PC-3 (cell line): ENCODE measurements at regions of chrX and their contacts with region 1.

Region 1: GRCh38 chrX:13123857-13124345 is 79.5 kb upstream of the FAM9C start:
- DNase-seq: peak; percentile 68
- ATAC-seq: peak; percentile 83
- H3K4me3 ChIP-seq: peak overlapping the region; percentile 14; the same call in 1 of the 2 replicates
- H3K27ac ChIP-seq: peak overlapping the region; percentile 92
- H3K4me1 ChIP-seq: peaks cover 54% of the 10 kb centered on the region
- H3K27me3 ChIP-seq: no peaks in the 10 kb centered on the region
- CTCF ChIP-seq: no peak

Region 2: DNA sequence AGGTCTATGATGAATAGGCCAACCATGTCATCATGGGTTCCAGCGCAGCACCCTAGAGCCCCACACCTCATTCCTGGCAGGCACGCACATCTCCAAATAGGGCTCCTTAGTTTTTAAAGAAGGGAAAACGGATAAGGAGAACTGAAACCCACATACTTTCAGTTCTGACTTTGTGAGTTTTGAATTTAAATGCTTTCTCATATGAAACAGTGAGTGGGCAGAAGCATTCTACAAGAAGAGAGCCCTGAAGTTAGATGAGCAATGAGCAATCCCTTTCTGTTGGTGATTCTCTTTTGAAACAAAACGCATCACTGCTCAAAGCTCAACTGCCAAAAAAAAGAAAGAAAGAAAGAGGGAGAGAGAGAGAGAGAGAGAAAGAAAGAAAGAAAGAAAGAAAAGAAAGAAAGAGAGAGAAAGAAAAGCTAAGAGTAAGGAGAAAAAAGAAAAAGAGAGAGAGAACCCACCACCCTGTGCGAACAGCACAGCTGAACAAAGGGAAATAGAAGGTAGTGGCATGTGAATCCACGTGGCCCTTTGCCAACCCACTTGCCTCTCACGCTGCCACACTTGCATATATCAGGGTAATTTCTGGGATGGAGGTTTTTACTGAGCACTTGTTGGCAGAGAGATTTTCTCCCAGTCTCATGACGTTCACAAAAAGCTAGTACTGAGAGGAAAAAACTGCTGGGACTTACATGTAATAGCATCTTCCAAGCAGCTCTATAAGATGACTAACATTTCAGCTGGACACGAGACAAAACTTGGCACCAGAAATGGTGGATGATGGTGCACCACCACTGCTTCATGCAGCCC is 118.0 kb before region 1 on chrX:
- CTCF ChIA-PET with region 1: no interaction called
- POLR2A ChIA-PET with region 1: no interaction called
- intact Hi-C with region 1: loop called (anchors 5 kb)
- DNase-seq: no peak
- ATAC-seq: no peak
- H3K4me3 ChIP-seq: no peak overlapping the region
- H3K27ac ChIP-seq: peak overlapping the region; percentile 97
- H3K4me1 ChIP-seq: peaks cover 78% of the 10 kb centered on the region
- H3K27me3 ChIP-seq: no peaks in the 10 kb centered on the region
- CTCF ChIP-seq: no peak

Region 3: GRCh38 chrX:13087322-13088155 is 36.4 kb before region 1 on chrX:
- CTCF ChIA-PET with region 1: no interaction called
- POLR2A ChIA-PET with region 1: no interaction called
- intact Hi-C with region 1: loop called (anchors 1 kb)
- DNase-seq: peak; percentile 85
- ATAC-seq: peak; percentile 92
- H3K4me3 ChIP-seq: no peak overlapping the region
- H3K27ac ChIP-seq: peak overlapping the region; percentile 95
- H3K4me1 ChIP-seq: peaks cover 20% of the 10 kb centered on the region
- H3K27me3 ChIP-seq: no peaks in the 10 kb centered on the region
- CTCF ChIP-seq: no peak

Region 4: GRCh38 chrX:13194291-13195103 is 70.6 kb after region 1 on chrX:
- CTCF ChIA-PET with region 1: no interaction called
- POLR2A ChIA-PET with region 1: no interaction called
- intact Hi-C with region 1: loop called (anchors 5 kb)
- DNase-seq: peak; percentile 70
- ATAC-seq: peak; percentile 61
- H3K4me3 ChIP-seq: no peak overlapping the region
- H3K27ac ChIP-seq: peak overlapping the region; percentile 86
- H3K4me1 ChIP-seq: peaks cover 48% of the 10 kb centered on the region
- H3K27me3 ChIP-seq: no peaks in the 10 kb centered on the region
- CTCF ChIP-seq: no peak

Region 5: DNA sequence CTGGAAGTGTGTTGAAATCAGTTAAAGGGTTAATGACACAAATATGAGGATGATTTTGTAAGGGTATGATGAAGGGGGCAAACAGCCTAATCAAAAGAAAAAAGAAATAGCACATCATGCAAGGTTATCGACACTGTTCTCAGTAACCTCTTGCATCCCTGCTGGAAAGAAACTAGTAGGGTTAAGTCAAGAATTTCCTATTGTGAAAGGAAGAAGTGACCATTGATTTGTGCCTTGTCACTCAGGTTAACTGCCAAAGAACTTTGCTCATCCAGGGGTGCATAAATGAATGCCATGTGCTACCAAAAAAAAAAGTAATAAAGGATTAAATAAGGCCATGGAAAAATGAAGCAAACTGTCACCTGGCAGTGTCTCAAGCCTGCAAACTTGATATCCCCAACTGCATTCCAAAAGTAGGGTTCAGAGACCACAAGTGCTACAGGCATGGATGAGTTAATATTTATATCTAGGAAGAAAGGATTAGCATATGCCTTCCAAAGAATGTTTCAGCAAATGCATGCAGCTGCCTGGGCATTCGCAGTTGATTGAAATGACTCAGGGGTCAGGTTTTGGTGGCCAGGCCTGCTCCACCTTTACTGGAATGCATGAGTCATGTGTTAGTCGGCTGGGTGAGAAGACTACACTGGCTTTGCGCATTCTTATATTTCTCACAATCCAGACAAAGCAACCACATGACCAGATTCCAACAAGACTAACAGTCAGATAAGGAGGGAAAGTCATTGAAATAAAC is 274.3 kb after region 1 on chrX:
- CTCF ChIA-PET with region 1: no interaction called
- POLR2A ChIA-PET with region 1: no interaction called
- intact Hi-C with region 1: loop called (anchors 1 kb)
- DNase-seq: peak; percentile 97
- ATAC-seq: peak; percentile 93
- H3K4me3 ChIP-seq: no peak overlapping the region
- H3K27ac ChIP-seq: peak overlapping the region; percentile 95
- H3K4me1 ChIP-seq: peaks cover 30% of the 10 kb centered on the region
- H3K27me3 ChIP-seq: no peaks in the 10 kb centered on the region
- CTCF ChIP-seq: no peak